Activated CD4-positive, alpha-beta T cell treated with anti-CD3 and anti-CD28 coated beads, Interleukin-2, amount 10 ng/mL, durations not matched to agents 24 days and 14 days (primary cell): ENCODE measurements at regions of chr1 and their contacts with region 1.

Region 1: GRCh38 chr1:224513787-224514209 is 79.2 kb upstream of the WDR26 start:
- DNase-seq: peak; percentile 96
- H3K4me3 Mint-ChIP-seq: no peak overlapping the region
- H3K27ac Mint-ChIP-seq: no peak overlapping the region
- H3K4me1 Mint-ChIP-seq: peaks cover 23% of the 10 kb centered on the region
- H3K27me3 Mint-ChIP-seq: peaks cover 2% of the 10 kb centered on the region

Region 2: GRCh38 chr1:224377676-224378006 is 136.2 kb before region 1 on chr1:
- intact Hi-C with region 1: no loop called
- DNase-seq: peak; percentile 71
- H3K4me3 Mint-ChIP-seq: peak overlapping the region; percentile 56
- H3K27ac Mint-ChIP-seq: peak overlapping the region; percentile 84
- H3K4me1 Mint-ChIP-seq: peaks cover 84% of the 10 kb centered on the region
- H3K27me3 Mint-ChIP-seq: no peaks in the 10 kb centered on the region

Region 3: GRCh38 chr1:224407571-224408560 is 105.9 kb before region 1 on chr1:
- intact Hi-C with region 1: no loop called
- DNase-seq: no peak
- H3K4me3 Mint-ChIP-seq: no peak overlapping the region
- H3K27ac Mint-ChIP-seq: no peak overlapping the region
- H3K4me1 Mint-ChIP-seq: peaks cover 27% of the 10 kb centered on the region
- H3K27me3 Mint-ChIP-seq: no peaks in the 10 kb centered on the region

Region 4: GRCh38 chr1:224644553-224645154 is 130.9 kb after region 1 on chr1:
- intact Hi-C with region 1: loop called (anchors 5 kb)
- DNase-seq: peak; percentile 89
- H3K4me3 Mint-ChIP-seq: no peak overlapping the region
- H3K27ac Mint-ChIP-seq: no peak overlapping the region
- H3K4me1 Mint-ChIP-seq: peaks cover 8% of the 10 kb centered on the region
- H3K27me3 Mint-ChIP-seq: peaks cover 17% of the 10 kb centered on the region

Region 5: DNA sequence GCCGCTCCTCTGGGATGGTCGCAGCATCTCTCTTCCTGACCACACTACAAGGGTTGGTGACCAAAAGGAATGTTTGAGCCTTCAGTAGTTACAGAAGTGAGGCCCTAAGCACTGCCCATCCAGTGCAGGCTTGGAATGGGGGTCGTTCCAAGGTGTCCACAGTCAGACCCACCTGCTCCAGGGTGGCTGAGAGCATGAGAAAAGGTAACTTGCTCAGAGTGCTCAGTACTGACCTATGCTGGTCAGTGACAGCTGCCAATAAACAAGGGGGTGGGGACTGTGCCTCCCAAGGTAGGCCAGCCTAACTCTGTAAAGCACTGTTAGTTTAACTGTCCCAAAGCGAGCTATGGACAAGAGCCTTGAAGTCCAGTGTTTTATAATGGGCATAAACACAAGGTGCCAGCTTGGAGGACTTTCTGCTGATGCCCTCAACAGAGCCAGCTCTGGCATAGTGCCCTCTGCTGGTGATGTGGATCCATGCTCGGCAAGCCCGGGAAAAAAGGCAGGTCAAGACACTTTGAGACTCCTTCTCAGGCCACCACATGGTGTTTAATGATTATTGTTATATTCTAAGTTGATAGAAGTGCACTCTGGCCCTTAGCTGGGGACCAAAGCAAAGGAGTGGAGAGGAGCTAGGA is 337.5 kb after region 1 on chr1:
- intact Hi-C with region 1: loop called (anchors 1 kb)
- DNase-seq: peak; percentile 88
- H3K4me3 Mint-ChIP-seq: no peak overlapping the region
- H3K27ac Mint-ChIP-seq: no peak overlapping the region
- H3K4me1 Mint-ChIP-seq: no peaks in the 10 kb centered on the region
- H3K27me3 Mint-ChIP-seq: peaks cover 2% of the 10 kb centered on the region

Region 6: GRCh38 chr1:224922404-224923164 is 408.8 kb after region 1 on chr1:
- intact Hi-C with region 1: loop called (anchors 2 kb)
- DNase-seq: no peak
- H3K4me3 Mint-ChIP-seq: no peak overlapping the region
- H3K27ac Mint-ChIP-seq: no peak overlapping the region
- H3K4me1 Mint-ChIP-seq: no peaks in the 10 kb centered on the region
- H3K27me3 Mint-ChIP-seq: peaks cover 2% of the 10 kb centered on the region